ENCODE measurements at regions of chr3 and their contacts with region 1.

Region 1: DNA sequence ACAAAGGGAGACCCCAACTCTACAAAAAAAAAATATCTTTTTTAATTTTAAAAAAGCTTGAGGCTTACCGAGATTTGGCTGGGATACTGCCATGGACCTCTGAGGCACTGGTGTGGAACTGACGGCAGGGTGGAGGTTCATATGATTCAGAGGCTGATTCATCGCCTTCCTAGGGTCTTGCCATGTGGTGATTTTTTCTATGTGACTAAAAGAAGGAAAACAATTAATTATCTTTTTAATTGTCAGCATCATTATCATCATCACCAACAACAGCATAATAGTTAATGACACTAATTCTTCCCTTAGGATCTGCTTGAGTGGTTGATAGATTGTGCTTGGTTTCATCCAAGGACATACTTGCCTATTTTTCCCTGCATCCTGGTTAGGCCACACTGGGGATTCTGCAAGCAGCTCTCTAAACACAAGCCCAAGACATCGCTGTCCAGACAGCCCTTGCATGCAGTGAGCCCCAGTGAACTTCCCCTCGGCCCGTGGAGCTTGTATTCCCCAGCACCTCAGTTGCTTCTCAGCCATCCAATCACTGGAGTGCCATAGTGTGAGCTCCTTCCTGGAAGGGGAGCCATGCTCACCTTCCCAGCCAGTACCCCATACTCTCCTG is 84.9 kb downstream of the WWTR1 start:
- DNase-seq: no peak
- H3K4me3 Mint-ChIP-seq: no peak overlapping the region
- H3K27ac Mint-ChIP-seq: no peak overlapping the region
- H3K4me1 Mint-ChIP-seq: peaks cover 31% of the 10 kb centered on the region
- H3K27me3 Mint-ChIP-seq: peaks cover under 1% of the 10 kb centered on the region

Region 2: DNA sequence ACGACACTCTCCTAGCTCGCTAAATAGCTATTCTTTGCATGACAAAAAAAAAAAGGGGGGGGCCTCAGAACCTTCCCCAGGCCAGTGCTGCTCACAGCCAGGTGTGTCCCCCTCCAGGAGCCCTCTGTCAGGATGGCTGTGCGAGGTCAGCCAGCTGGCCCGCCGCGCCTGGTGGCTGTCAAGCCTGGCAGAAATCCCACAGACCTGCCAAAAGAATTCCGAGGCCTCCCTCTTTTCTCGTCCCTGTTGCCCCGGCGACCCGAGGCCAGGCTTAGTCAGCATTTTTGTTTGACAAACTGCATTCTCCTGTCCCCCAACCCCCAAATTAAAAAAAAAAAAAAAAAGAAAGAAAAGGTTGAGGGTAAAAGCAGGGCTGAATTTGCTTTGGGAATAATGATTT is 36.5 kb before region 1 on chr3:
- CTCF ChIA-PET with region 1: no interaction called
- POLR2A ChIA-PET with region 1: no interaction called
- DNase-seq: no peak
- H3K4me3 Mint-ChIP-seq: no peak overlapping the region
- H3K27ac Mint-ChIP-seq: no peak overlapping the region
- H3K4me1 Mint-ChIP-seq: peaks cover 4% of the 10 kb centered on the region
- H3K27me3 Mint-ChIP-seq: peaks cover 3% of the 10 kb centered on the region

Region 3: DNA sequence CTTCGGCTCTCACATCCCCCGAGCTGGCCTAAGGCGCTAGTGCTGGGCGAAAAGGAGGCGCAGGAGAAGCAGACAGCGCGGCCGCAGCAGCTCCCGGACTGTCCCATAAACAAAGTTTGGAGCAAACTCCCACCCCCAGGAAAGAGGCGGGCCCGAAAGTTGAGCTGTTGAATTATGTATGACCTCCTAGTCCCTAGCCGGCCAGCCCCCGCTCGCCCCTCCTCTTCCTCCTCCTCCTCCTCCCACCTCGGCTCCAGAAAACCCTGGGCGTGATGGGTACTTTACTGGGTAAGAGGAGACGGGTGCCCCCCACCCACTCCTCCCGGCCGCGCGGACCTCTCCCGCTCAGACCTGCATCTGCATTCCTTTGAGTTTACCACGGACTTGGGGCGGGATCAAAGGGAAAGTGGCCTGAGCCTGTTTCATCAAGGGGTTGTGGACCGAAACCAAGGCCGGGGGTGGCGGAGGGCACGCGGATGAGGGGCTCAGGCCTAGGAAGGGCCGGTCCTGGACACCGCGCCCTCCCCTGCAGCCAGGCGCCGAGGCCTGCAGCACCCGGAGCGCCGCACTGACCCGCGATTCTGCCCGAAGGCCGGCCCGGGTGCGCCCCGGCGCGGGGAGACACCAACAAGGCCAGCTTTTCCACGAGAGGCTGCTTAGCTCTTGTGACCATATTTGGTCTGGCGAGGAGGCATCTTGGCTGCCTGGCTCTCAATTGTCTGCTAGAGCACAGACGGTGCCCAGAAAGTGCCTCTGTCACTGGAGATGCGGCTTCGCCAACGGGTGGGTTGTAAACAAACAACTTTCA is 85.2 kb after region 1 on chr3 and contains the start of gene WWTR1:
- CTCF ChIA-PET with region 1: interaction called, 11 read pairs
- POLR2A ChIA-PET with region 1: no interaction called
- DNase-seq: peak; percentile 58
- H3K4me3 Mint-ChIP-seq: peak within 1 kb of the TSS; percentile 86
- H3K27ac Mint-ChIP-seq: peak within 1 kb of the TSS; percentile 40
- H3K4me1 Mint-ChIP-seq: peaks cover 22% of the 10 kb centered on the region
- H3K27me3 Mint-ChIP-seq: peaks cover 50% of the 10 kb centered on the region
- total RNA-seq, gene WWTR1: 1.9 to 2.1 TPM

Region 4: DNA sequence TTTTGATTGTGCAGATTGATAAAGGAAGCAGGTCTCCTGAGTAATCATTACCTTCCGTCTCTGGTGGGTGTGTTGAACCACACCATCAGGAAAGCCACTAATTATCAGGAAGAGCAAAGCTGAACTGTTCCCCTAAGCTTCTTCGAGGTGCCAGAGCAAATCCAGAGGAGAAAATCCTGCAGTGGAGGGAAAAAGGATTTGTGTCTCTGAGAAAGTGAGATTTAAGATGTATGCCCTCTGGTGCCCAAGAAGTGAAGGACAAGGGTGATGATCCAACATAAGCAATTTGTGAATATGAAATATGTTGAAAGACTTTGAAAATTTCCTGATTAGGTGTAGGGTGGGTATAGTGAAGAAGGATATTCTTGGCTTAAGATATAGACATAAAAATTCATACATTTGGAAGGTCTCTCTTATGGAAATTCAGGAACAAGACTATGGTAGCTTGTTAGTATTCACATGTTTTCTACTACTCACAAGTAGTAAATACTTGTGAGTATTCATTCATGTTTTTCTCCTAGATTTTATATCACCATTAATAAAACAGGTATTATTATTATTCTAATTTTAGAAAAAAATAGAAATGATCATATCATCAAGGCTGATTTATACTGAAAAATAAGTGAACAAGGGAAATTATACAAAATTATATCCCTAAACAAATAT is 144.6 kb after region 1 on chr3:
- CTCF ChIA-PET with region 1: interaction called, 25 read pairs
- POLR2A ChIA-PET with region 1: no interaction called
- DNase-seq: peak; percentile 34
- H3K4me3 Mint-ChIP-seq: no peak overlapping the region
- H3K27ac Mint-ChIP-seq: no peak overlapping the region
- H3K4me1 Mint-ChIP-seq: peaks cover 10% of the 10 kb centered on the region
- H3K27me3 Mint-ChIP-seq: no peaks in the 10 kb centered on the region

Region 5: GRCh38 chr3:149752051-149752787 is 179.3 kb after region 1 on chr3 and contains the start of gene COMMD2:
- CTCF ChIA-PET with region 1: interaction called, 23 read pairs
- POLR2A ChIA-PET with region 1: interaction called, 4 read pairs
- DNase-seq: peak; percentile 82
- H3K4me3 Mint-ChIP-seq: peak within 1 kb of the TSS; percentile 95
- H3K27ac Mint-ChIP-seq: peak within 1 kb of the TSS; percentile 82
- H3K4me1 Mint-ChIP-seq: peaks cover 32% of the 10 kb centered on the region
- H3K27me3 Mint-ChIP-seq: peaks cover 5% of the 10 kb centered on the region
- total RNA-seq, gene COMMD2: 26.3 to 28.9 TPM

Region 6: GRCh38 chr3:149771652-149772271 is 198.9 kb after region 1 on chr3:
- CTCF ChIA-PET with region 1: interaction called, 26 read pairs
- POLR2A ChIA-PET with region 1: no interaction called
- DNase-seq: peak; percentile 28
- H3K4me3 Mint-ChIP-seq: no peak overlapping the region
- H3K27ac Mint-ChIP-seq: no peak overlapping the region
- H3K4me1 Mint-ChIP-seq: no peaks in the 10 kb centered on the region
- H3K27me3 Mint-ChIP-seq: peaks cover 17% of the 10 kb centered on the region